ENCODE measurements at regions of chr1 and their contacts with region 1.

Region 1: GRCh38 chr1:40736085-40736531 is 44.6 kb downstream of the NFYC start:
- DNase-seq: no peak
- H3K4me3 Mint-ChIP-seq: no peak overlapping the region
- H3K27ac Mint-ChIP-seq: no peak overlapping the region
- H3K4me1 Mint-ChIP-seq: peaks cover 21% of the 10 kb centered on the region
- H3K27me3 Mint-ChIP-seq: no peaks in the 10 kb centered on the region

Region 2: DNA sequence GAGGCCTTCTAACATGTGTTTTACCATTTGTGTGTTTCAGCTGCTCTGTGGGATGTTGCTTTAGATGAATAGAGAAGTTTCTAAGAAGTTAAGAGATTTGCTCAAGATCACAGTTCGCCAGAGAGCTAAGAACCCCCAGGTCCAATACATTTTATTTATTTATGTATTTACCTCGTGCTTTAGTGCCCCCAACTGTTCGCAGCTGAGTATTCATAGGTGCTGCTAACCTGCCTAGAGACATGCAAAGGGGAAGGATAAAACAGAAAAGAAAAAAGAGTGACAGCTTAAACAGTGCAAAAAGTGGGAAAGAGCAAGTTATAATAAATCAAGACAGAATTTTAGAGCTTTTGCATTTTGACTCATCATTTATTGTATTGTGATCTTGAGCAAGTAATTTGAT is 13.5 kb before region 1 on chr1:
- CTCF ChIA-PET with region 1: interaction called, 10 read pairs
- POLR2A ChIA-PET with region 1: no interaction called
- DNase-seq: no peak
- H3K4me3 Mint-ChIP-seq: no peak overlapping the region
- H3K27ac Mint-ChIP-seq: no peak overlapping the region
- H3K4me1 Mint-ChIP-seq: peaks cover 16% of the 10 kb centered on the region
- H3K27me3 Mint-ChIP-seq: no peaks in the 10 kb centered on the region

Region 3: DNA sequence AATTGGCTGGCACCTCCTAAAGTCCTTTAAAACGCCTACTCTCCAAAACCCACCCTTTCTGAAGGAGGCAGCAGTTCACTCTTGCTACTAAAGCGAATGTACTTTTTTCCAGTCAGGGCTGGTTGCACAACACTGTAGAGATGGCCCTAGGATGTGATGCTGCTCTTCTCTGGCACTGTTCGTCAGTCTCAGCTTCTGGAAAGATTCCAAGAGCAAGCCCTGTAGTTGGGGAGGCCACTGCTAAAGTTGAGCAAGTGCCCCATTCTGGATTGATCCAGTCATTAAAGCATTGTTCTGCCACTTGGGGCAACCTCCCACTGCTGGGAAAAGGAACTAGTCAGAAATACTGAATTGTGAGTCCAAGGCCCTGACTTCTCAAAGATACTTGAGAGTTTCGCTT is 19.0 kb after region 1 on chr1:
- CTCF ChIA-PET with region 1: no interaction called
- POLR2A ChIA-PET with region 1: no interaction called
- DNase-seq: no peak
- H3K4me3 Mint-ChIP-seq: no peak overlapping the region
- H3K27ac Mint-ChIP-seq: no peak overlapping the region
- H3K4me1 Mint-ChIP-seq: peaks cover 21% of the 10 kb centered on the region
- H3K27me3 Mint-ChIP-seq: no peaks in the 10 kb centered on the region

Measured in activated CD4-positive, alpha-beta T cell treated with anti-CD3 and anti-CD28 coated beads, Interleukin-2, amount 10 ng/mL, durations not matched to agents 7 days and 5 days (primary cell).